ENCODE measurements at regions of chr14 and their contacts with region 1.

Region 1: GRCh38 chr14:91060351-91061055 is at the start of gene RPS6KA5:
- DNase-seq: peak; percentile 100
- ATAC-seq: peak; percentile 84
- H3K4me3 Mint-ChIP-seq: peak within 1 kb of the TSS; percentile 76
- H3K27ac Mint-ChIP-seq: peak within 1 kb of the TSS; percentile 78
- H3K4me1 Mint-ChIP-seq: peaks cover 57% of the 10 kb centered on the region
- H3K27me3 Mint-ChIP-seq: no peaks in the 10 kb centered on the region
- total RNA-seq, gene RPS6KA5: 48.1 to 58.2 TPM

Region 2: DNA sequence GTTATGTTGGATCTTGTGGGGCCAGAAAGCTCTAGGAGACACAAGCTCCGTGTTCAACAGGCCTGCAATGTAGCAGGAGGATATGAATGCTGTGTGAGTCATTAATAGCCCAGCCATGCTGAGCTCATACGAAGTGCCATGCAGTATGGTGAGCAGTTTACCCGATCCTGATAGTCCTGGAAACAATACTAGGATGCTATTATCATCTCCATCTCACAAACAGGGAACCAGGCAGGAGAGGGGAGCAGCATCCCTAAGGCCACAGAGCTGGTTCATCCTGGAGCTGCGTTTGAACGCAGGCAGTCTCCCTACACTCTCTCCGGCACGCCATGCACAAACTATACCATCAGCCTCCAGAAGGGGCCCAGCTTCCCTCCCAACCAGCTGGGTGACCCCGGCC is 264.8 kb before region 1 on chr14:
- CTCF ChIA-PET with region 1: no interaction called
- DNase-seq: no peak
- ATAC-seq: no peak
- H3K4me3 Mint-ChIP-seq: no peak overlapping the region
- H3K27ac Mint-ChIP-seq: no peak overlapping the region
- H3K4me1 Mint-ChIP-seq: peaks cover 2% of the 10 kb centered on the region
- H3K27me3 Mint-ChIP-seq: no peaks in the 10 kb centered on the region

Region 3: GRCh38 chr14:90903101-90903500 is 157.4 kb before region 1 on chr14:
- CTCF ChIA-PET with region 1: interaction called, 11 read pairs
- DNase-seq: peak; percentile 74
- ATAC-seq: peak; percentile 93
- H3K4me3 Mint-ChIP-seq: no peak overlapping the region
- H3K27ac Mint-ChIP-seq: peak overlapping the region; percentile 72
- H3K4me1 Mint-ChIP-seq: peaks cover 27% of the 10 kb centered on the region
- H3K27me3 Mint-ChIP-seq: no peaks in the 10 kb centered on the region

Region 4: GRCh38 chr14:91078095-91078737 is 17.7 kb after region 1 on chr14:
- CTCF ChIA-PET with region 1: interaction called, 17 read pairs
- DNase-seq: peak; percentile 81
- ATAC-seq: peak; percentile 95
- H3K4me3 Mint-ChIP-seq: peak overlapping the region; percentile 50
- H3K27ac Mint-ChIP-seq: peak overlapping the region; percentile 99
- H3K4me1 Mint-ChIP-seq: peaks cover 56% of the 10 kb centered on the region
- H3K27me3 Mint-ChIP-seq: no peaks in the 10 kb centered on the region

Measured in activated CD8-positive, alpha-beta memory T cell treated with anti-CD3 and anti-CD28 coated beads, Interleukin-2, amount 10 ng/mL, durations not matched to agents 7 days and 5 days (primary cell).